Dendritic cell treated with granulocyte-macrophage colony-stimulating factor and Interleukin-4, amounts not matched to agents 40 ng/mL and 50 ng/mL, for 4 days (primary cell): ENCODE measurements at regions of chr10 and their contacts with region 1.

Region 1: GRCh38 chr10:112446855-112447711 is at the starts of genes VTI1A and ZDHHC6:
- H3K4me3 Mint-ChIP-seq: peak within 1 kb of the TSS; percentile 83
- H3K27ac Mint-ChIP-seq: peak within 1 kb of the TSS; percentile 99
- H3K4me1 Mint-ChIP-seq: peaks cover 32% of the 10 kb centered on the region
- H3K27me3 Mint-ChIP-seq: no peaks in the 10 kb centered on the region

Region 2: GRCh38 chr10:112183329-112184051 is 263.6 kb before region 1 on chr10 and contains the start of gene GPAM:
- intact Hi-C with region 1: loop called (anchors 5 kb)
- H3K4me3 Mint-ChIP-seq: peak within 1 kb of the TSS; percentile 94
- H3K27ac Mint-ChIP-seq: peak within 1 kb of the TSS; percentile 91
- H3K4me1 Mint-ChIP-seq: peaks cover 21% of the 10 kb centered on the region
- H3K27me3 Mint-ChIP-seq: peaks cover 21% of the 10 kb centered on the region

Region 3: GRCh38 chr10:112507046-112507445 is 60.0 kb after region 1 on chr10:
- intact Hi-C with region 1: no loop called
- H3K4me3 Mint-ChIP-seq: no peak overlapping the region
- H3K27ac Mint-ChIP-seq: no peak overlapping the region
- H3K4me1 Mint-ChIP-seq: peaks cover 11% of the 10 kb centered on the region
- H3K27me3 Mint-ChIP-seq: no peaks in the 10 kb centered on the region